HEK293T (cell line): ENCODE measurements at regions of chr17 and their contacts with region 1.

Region 1: DNA sequence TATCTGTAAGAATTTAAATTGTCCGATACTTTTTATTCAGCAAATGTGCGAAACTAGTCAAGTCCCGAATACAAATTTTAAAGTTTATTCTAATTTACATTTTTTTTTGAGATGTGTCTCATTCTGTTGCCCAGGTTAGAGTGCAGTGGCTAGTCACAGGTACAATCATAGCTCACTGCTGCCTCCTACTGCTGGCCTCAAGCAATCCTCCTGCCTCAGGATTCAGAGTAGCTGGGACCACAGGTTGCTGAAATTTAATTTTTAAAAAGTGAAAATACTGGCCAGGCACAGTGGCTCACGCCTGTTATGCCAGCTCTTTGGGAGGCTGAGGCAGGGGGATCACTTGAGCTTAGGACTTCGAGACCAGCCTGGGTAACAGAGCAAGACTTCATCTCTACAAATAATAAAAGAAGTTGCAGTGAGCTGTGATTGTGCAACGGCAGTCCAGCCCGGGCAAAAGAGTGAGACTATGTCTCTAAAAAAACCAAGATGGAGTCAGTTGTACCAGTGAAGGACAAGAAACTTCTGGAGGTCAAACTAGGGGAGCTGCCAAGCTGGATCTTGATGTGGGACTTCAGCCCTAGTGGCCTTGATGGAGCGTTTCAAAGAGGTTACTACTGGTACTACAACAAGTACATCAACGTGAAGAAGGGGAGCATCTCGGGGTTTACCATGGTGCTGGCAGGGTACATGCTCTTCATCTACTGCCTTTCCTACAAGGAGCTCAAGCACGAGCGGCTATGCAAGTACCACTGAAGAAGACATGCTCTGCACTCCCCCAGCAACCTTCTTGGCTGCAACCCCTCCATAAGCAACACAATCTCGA is 5.6 kb downstream of the POLG2 start:
- DNase-seq: no peak

Region 2: GRCh38 chr17:64320613-64321553 is 170.4 kb before region 1 on chr17:
- CTCF ChIA-PET with region 1: no interaction called
- POLR2A ChIA-PET with region 1: no interaction called
- DNase-seq: peak; percentile 89

Region 3: DNA sequence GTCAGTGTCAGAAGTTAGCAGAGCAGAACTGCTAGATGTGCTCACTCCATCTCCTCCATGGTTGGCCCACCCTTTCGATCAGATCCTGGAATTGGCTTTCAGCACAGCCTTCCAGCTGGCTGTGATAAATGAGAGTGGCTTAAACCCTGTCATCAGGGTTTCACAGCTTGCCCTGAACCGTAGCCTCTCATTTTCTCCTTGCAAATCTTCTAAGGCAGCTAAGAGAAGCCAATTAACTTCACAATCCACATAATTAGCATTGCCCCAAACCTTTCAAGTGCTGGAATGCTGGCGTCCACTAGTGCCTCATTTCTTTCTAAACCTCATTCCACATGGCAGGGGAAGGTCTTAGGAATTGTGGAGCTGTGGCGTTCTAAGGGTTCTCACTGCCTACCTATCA is 20.6 kb before region 1 on chr17:
- CTCF ChIA-PET with region 1: no interaction called
- POLR2A ChIA-PET with region 1: no interaction called
- DNase-seq: no peak

Region 4: DNA sequence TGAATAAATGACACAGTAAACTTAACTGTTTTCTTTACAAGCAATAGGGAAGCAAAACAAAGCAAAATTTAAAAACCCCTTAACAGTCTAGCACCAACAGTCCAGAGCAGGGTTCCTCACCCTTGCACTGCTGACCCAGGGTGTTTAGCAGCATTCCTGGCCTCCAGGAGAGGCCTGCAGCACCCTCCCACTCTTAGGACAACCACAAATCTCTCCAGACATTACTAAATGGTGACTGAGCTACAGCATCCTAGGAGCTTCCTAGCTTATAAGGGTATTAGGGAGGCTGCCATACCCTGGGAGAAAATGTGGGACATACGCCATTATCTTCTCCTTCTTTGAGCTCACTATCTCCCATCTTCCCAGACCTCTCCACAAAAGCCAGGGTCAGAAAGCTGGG is 10.3 kb before region 1 on chr17:
- CTCF ChIA-PET with region 1: interaction called, 14 read pairs
- POLR2A ChIA-PET with region 1: interaction called, 3 read pairs
- DNase-seq: no peak

Region 5: GRCh38 chr17:64506576-64507477 is 15.6 kb after region 1 on chr17 and contains the start of gene CEP95:
- CTCF ChIA-PET with region 1: interaction called, 6 read pairs
- POLR2A ChIA-PET with region 1: interaction called, 153 read pairs
- DNase-seq: no peak

Region 6: GRCh38 chr17:64520359-64520758 is 29.1 kb after region 1 on chr17:
- CTCF ChIA-PET with region 1: no interaction called
- POLR2A ChIA-PET with region 1: no interaction called
- DNase-seq: no peak